ENCODE measurements at regions of chr11 and their contacts with region 1.

Region 1: GRCh38 chr11:108664730-108665525 is at the start of gene DDX10:
- DNase-seq: peak; percentile 93 to 100 (median 99)
- ATAC-seq: peak; percentile 97 to 99
- H3K4me3 Mint-ChIP-seq: peak within 1 kb of the TSS; percentile 93 to 100 (median 100)
- H3K27ac Mint-ChIP-seq: peak within 1 kb of the TSS; percentile 89 to 100 (median 99)
- H3K4me1 Mint-ChIP-seq: peaks cover 29 to 53% (median 51%) of the 10 kb centered on the region in 4 donors
- H3K27me3 Mint-ChIP-seq: peaks cover 0 to 3% (median 0%) of the 10 kb centered on the region in 5 donors
- polyA plus RNA-seq, gene DDX10: 13.1 to 15.9 (median 15.2) TPM

Region 2: DNA sequence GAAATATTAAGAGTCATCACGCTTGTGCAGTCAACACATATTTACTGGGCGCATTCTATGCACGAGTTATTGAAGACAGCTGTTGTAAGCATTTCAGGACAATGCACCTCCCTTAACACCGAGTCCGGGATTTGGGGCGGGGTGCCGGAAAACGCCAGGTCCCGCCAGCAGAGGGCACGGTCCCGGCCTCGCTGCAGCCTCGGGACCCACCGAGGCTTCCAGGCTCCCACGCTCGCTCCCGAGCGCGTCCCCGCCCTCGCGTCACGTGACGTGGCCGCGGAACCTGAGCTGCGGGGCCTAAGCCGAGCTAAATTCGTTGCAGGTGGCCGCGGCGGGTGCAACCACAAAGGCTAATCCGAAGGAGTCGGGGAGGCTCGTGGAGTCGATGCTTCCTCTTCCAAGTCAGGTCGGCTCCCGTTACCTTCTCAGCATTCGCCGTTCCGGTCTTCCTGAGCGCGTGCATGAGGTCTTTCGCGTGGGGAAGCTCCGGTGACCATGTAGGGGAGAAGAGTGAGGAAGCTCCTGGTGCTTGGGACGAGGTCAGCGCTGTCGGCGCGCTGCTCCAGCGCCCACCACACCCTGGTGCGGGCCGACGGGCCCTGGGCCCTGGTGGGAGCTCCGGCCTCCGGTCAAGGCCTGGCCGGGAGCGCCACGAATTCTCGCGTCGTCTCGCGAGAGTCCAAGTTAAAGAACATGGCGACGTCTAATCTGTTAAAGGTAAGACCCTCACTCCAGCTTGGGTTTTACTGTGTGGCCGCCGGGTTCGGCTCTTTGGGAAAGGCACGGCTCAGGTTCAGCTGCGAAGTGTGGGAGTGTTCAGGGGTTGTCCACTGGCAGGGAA is 656.1 kb before region 1 on chr11 and contains the start of gene CUL5:
- POLR2A ChIA-PET with region 1: interaction called, 11 read pairs
- DNase-seq: peak; percentile 81 to 93 (median 90)
- ATAC-seq: peak; percentile 86 to 87
- H3K4me3 Mint-ChIP-seq: peak within 1 kb of the TSS in 8 of 10 donors; percentile 95 to 99 (median 98)
- H3K27ac Mint-ChIP-seq: peak within 1 kb of the TSS; percentile 94 to 99 (median 98)
- H3K4me1 Mint-ChIP-seq: peaks cover 8 to 16% (median 11%) of the 10 kb centered on the region in 4 donors
- H3K27me3 Mint-ChIP-seq: no peaks in the 10 kb centered on the region
- polyA plus RNA-seq, gene CUL5: 31.7 to 44.2 (median 38.2) TPM

Region 3: GRCh38 chr11:108697872-108698473 is 33.0 kb after region 1 on chr11:
- POLR2A ChIA-PET with region 1: no interaction called
- DNase-seq: peak in 8 of 10 donors; percentile 13 to 62 (median 27)
- ATAC-seq: peak; percentile 47 to 49
- H3K4me3 Mint-ChIP-seq: no peak overlapping the region
- H3K27ac Mint-ChIP-seq: no peak overlapping the region
- H3K4me1 Mint-ChIP-seq: peaks cover 0 to 5% (median 2%) of the 10 kb centered on the region in 4 donors
- H3K27me3 Mint-ChIP-seq: no peaks in the 10 kb centered on the region